ENCODE measurements at regions of chrX and their contacts with region 1.

Region 1: GRCh38 chrX:11558972-11559371 is 106.7 kb downstream of the ARHGAP6 start:
- DNase-seq: peak; percentile 3
- H3K4me3 ChIP-seq: no peak overlapping the region
- H3K27ac ChIP-seq: no peak overlapping the region
- H3K4me1 ChIP-seq: no peaks in the 10 kb centered on the region
- H3K27me3 ChIP-seq: no peaks in the 10 kb centered on the region
- CTCF ChIP-seq: peak; percentile 40 to 52

Region 2: DNA sequence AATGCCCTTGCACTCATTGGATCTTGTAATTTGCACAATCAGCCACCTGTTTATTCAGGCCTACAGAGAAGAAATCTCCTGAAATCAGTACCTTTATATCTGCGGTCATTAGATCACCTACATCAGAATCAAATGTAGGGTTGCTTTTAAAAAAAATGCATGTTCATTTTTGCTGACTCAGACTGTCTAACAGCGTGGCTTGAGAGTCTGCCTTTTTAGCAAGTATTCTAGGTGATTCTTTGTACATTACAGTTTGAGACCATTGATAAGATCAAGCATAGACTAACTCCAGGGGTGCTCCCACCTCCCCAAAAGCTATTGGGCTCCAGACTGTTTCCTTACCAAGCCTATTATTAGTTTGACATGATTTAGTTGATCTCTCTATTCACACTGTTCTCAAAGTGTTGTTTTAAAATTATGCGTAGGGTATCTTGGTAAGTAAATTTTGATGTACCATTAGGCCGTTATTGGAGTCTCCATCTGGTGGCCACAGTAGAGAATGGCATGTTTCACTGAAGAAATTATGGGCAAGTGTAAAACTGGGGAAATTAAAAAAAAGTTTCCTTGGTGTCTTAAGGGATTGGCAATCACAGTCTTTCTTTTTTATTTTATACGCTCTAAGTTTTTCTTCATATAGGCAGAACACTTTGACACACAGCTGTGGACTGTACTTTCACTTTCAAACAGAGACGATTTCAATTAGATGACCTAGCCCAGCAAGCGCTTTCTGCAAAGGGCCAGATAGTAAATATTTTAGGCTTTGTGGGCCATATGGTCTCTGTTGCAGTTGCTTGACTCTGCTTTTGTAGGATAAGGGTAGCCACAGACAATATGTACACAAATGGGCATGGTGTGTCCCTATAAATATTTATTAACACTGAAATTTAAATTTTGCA is 165.4 kb after region 1 on chrX:
- CTCF ChIA-PET with region 1: no interaction called
- dilution Hi-C with region 1: no loop called
- in situ Hi-C with region 1: no loop called
- intact Hi-C with region 1: loop called (anchors 1 kb)
- DNase-seq: peak; percentile 14
- H3K4me3 ChIP-seq: no peak overlapping the region
- H3K27ac ChIP-seq: no peak overlapping the region
- H3K4me1 ChIP-seq: no peaks in the 10 kb centered on the region
- H3K27me3 ChIP-seq: no peaks in the 10 kb centered on the region
- CTCF ChIP-seq: peak; percentile 72 to 74

Region 3: DNA sequence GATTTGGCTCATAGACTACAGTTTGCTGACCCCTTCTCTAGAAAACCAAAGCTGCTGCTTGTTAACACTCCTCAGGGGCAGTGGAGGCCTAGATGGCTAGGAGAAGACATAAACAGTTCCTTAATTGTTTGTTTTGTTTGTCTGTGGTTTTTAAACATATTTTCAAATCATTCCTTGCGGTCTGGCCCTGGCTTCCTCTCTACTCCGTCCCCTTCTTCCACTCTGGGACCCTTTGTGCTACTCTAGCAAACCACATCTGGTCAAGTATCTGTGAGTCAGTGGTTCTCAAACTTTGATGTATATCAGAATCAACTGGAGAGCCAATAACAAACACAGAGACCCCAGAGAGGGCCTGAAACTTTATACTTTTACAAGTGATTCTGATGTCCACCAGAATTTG is 615.4 kb after region 1 on chrX:
- CTCF ChIA-PET with region 1: no interaction called
- dilution Hi-C with region 1: no loop called
- in situ Hi-C with region 1: no loop called
- intact Hi-C with region 1: no loop called
- DNase-seq: no peak
- H3K4me3 ChIP-seq: no peak overlapping the region
- H3K27ac ChIP-seq: no peak overlapping the region
- H3K4me1 ChIP-seq: no peaks in the 10 kb centered on the region
- H3K27me3 ChIP-seq: no peaks in the 10 kb centered on the region
- CTCF ChIP-seq: no peak